Heart left ventricle (tissue), 16 donors: ENCODE measurements at regions of chr12 and their contacts with region 1.

Region 1: DNA sequence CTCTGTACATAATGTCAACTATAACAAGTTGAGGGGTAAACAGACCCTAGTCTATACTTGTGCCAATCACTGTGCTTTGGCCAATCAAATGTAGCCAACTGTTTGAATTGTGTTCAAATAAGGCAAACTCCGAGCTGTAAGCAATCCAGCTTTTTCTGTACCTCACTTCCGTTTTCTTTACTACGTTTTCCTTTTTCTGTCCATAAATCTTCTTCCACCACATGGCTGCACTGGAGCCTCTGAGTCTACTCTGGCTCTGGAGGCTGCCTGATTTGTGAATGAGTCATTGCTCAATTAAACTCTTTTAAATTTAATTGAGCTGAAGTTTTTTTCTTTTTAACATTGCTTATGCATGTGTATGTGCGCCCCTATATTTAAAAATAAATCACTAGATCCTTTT is 29.7 kb downstream of the CLEC1A start:
- DNase-seq: no peak
- ATAC-seq: peak in 1 of 4 donors; percentile 16
- H3K4me3 ChIP-seq: peak overlapping the region in 1 of 12 donors; percentile 12
- H3K27ac ChIP-seq: peak overlapping the region; percentile 49 to 91 (median 78)
- H3K4me1 ChIP-seq: peaks cover 0 to 43% (median 11%) of the 10 kb centered on the region in 12 donors
- H3K27me3 ChIP-seq: no peaks in the 10 kb centered on the region
- CTCF ChIP-seq: no peak
- POLR2A ChIP-seq: no peak

Region 2: GRCh38 chr12:9951026-9951675 is 117.9 kb before region 1 on chr12:
- intact Hi-C with region 1: no loop called
- DNase-seq: no peak
- ATAC-seq: no peak
- H3K4me3 ChIP-seq: no peak overlapping the region
- H3K27ac ChIP-seq: peak overlapping the region in 1 of 12 donors; percentile 44
- H3K4me1 ChIP-seq: peaks cover 0 to 33% (median 0%) of the 10 kb centered on the region in 12 donors
- H3K27me3 ChIP-seq: peaks cover 0 to 3% (median 0%) of the 10 kb centered on the region in 9 donors
- CTCF ChIP-seq: no peak
- POLR2A ChIP-seq: no peak

Region 3: DNA sequence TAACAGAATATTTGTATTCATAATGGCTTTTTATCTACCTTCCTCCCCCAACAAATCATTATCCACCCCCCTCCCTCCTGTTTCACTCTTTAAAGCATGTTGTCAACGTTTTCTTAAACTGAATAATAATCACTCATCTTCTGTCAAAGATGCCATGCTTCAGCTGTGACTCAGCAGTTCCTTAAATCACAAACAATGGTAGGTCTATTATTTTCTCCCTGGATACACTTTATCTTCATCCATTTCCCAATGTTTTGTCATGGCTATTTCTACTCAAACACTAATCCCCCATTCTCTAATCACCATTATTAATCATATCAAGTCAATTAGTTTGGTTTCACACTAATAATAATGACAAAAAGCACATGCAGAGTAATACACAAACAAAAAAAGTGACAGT is 52.2 kb before region 1 on chr12:
- intact Hi-C with region 1: no loop called
- DNase-seq: no peak
- ATAC-seq: no peak
- H3K4me3 ChIP-seq: no peak overlapping the region
- H3K27ac ChIP-seq: no peak overlapping the region
- H3K4me1 ChIP-seq: peaks cover 0 to 10% (median 0%) of the 10 kb centered on the region in 12 donors
- H3K27me3 ChIP-seq: no peaks in the 10 kb centered on the region
- CTCF ChIP-seq: no peak
- POLR2A ChIP-seq: no peak

Region 4: GRCh38 chr12:10098791-10099190 is 29.7 kb after region 1 on chr12 and contains the start of gene CLEC1A:
- intact Hi-C with region 1: loop called in 3 of 10 experiments (anchors 1 to 5 kb)
- DNase-seq: peak in 4 of 5 donors; percentile 35 to 58 (median 46)
- ATAC-seq: peak; percentile 74 to 86 (median 76)
- H3K4me3 ChIP-seq: peak within 1 kb of the TSS; percentile 2 to 61 (median 45)
- H3K27ac ChIP-seq: peak within 1 kb of the TSS; percentile 60 to 85 (median 75)
- H3K4me1 ChIP-seq: peaks cover 0 to 63% (median 10%) of the 10 kb centered on the region in 12 donors
- H3K27me3 ChIP-seq: no peaks in the 10 kb centered on the region
- CTCF ChIP-seq: no peak
- POLR2A ChIP-seq: peak in 1 of 2 donors; percentile 73
- total RNA-seq, gene CLEC1A: 1.2 to 7.3 (median 2.5) TPM